A549 (cell line): ENCODE measurements at regions of chr6 and their contacts with region 1.

Region 1: GRCh38 chr6:125974214-125974866 is 12.0 kb upstream of the TRMT11 start:
- DNase-seq: peak; percentile 19 to 52
- ATAC-seq: peak; percentile 77 to 81
- H3K4me3 ChIP-seq: no peak overlapping the region
- H3K27ac ChIP-seq: peak overlapping the region; percentile 41 to 73; a peak in 3 of 6 replicates
- H3K4me1 ChIP-seq: peaks cover 6% of the 10 kb centered on the region; the same call in 1 of the 3 replicates
- CTCF ChIP-seq: peak; percentile 72
- EP300 ChIP-seq: no peak
- POLR2A ChIP-seq: no peak
- RAD21 ChIP-seq: peak; percentile 72 to 73

Region 2: DNA sequence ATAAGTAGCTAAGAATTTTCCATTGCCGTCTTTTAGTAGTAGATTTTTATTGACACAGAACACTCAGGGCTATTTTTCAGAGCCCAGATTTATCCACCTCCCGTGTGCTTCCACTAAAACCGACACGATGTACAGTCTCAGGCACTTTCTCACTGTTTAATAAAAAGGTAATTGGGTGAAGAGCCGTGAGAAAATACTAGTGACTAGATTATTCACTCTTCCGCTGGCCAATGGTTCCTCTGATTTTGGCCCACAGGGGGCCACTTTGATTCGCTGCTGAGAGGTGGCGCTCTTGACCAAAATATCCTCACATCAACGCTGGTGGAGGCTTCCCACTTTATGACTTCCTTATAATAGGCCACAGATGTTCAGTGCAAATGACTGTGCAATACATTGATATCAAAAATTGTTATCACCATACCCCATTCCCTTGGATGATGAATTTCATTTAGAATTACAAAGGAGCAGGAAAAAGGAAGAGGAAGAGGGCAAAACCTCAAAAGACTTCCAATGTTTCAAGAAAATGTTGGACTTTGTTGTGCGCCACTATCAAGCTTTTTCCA is 660.2 kb before region 1 on chr6:
- CTCF ChIA-PET with region 1: interaction called, 15 read pairs
- POLR2A ChIA-PET with region 1: no interaction called
- DNase-seq: peak; percentile 27 to 53
- ATAC-seq: peak; percentile 90 to 93
- H3K4me3 ChIP-seq: no peak overlapping the region
- H3K27ac ChIP-seq: no peak overlapping the region
- H3K4me1 ChIP-seq: peaks cover 15% of the 10 kb centered on the region; the same call in 2 of the 3 replicates
- CTCF ChIP-seq: peak; percentile 81
- EP300 ChIP-seq: no peak
- POLR2A ChIP-seq: no peak
- RAD21 ChIP-seq: peak; percentile 84 to 86

Region 3: DNA sequence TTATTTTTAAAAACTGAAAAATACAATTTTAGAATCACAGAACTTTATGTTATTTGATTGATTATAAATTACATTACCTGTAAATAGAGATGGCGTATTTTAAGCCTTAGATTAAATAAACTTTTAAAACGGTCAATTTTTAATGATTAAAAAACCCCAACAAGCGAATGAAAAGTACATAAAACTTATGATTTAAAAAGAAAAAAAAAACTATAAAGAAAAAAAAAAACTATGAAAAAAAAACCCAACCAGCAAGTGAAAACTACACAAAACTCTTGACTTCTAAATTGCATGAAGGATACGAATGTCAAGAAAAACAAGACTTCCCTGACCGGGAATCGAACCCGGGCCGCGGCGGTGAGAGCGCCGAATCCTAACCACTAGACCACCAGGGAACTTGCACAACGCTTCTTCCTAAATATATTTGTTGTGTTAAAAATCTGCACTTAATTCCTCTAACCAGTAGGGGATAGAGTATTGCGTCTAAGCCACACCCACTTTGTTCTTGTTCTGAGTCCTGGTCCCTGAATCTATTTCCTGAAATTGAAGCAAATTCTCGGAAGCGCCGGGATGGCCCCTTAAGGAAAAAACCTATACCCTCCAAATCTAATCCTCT is 194.3 kb before region 1 on chr6:
- CTCF ChIA-PET with region 1: interaction called, 12 read pairs
- POLR2A ChIA-PET with region 1: no interaction called
- DNase-seq: peak; percentile 75 to 91
- ATAC-seq: peak; percentile 85 to 89
- H3K4me3 ChIP-seq: peak overlapping the region; percentile 53
- H3K27ac ChIP-seq: peak overlapping the region; percentile 88 to 91
- H3K4me1 ChIP-seq: peaks cover 23% of the 10 kb centered on the region
- CTCF ChIP-seq: no peak
- EP300 ChIP-seq: no peak
- POLR2A ChIP-seq: no peak
- RAD21 ChIP-seq: no peak

Region 4: GRCh38 chr6:125858427-125859320 is 115.7 kb before region 1 on chr6:
- CTCF ChIA-PET with region 1: interaction called, 25 read pairs
- POLR2A ChIA-PET with region 1: no interaction called
- DNase-seq: peak; percentile 83 to 85
- ATAC-seq: peak; percentile 100
- H3K4me3 ChIP-seq: no peak overlapping the region
- H3K27ac ChIP-seq: peak overlapping the region; percentile 44 to 68; a peak in 4 of 6 replicates
- H3K4me1 ChIP-seq: peaks cover 18% of the 10 kb centered on the region
- CTCF ChIP-seq: peak; percentile 74
- EP300 ChIP-seq: no peak
- POLR2A ChIP-seq: no peak
- RAD21 ChIP-seq: peak; percentile 83 to 95

Region 5: DNA sequence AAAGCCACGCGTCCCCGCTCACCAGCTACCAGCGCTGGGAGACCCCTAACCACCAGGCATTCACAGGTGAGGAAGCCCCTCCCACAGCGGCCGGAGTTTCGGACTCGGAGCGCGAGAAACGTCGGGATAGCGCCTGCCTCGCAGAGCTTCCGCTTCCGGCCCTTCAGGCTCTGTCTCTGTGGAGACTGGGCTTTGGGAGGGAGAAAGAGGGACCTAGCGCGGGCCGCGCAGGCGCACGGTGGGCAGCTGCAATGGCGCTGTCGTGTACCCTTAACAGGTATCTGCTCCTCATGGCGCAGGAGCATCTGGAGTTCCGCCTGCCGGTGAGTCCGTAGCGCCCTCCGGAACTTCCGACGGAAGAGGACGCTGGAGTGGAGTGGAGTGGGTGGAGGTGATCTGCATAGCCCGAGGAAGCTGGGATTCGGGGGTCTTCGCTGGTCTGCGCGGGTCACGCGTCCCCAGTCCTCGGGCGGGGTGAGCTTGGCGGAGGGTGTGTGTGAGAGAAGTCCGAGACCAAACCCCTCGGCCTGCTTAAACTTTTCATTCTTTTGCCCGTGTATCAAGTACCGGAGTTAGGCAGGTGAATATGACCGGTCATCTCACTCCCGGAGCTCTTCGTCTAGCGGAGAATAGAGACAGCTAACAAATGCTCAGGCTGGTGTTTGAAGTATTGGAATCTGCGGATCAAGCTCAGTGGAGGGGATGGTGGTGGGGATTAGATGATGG is 12.1 kb after region 1 on chr6 and contains the start of gene TRMT11:
- CTCF ChIA-PET with region 1: interaction called, 13 read pairs
- POLR2A ChIA-PET with region 1: interaction called, 4 read pairs
- DNase-seq: peak; percentile 85 to 89
- ATAC-seq: peak; percentile 97 to 99
- H3K4me3 ChIP-seq: peak within 1 kb of the TSS; percentile 68
- H3K27ac ChIP-seq: peak within 1 kb of the TSS; percentile 92 to 95
- H3K4me1 ChIP-seq: peaks cover 46% of the 10 kb centered on the region
- CTCF ChIP-seq: no peak
- EP300 ChIP-seq: no peak
- POLR2A ChIP-seq: peak; percentile 90
- RAD21 ChIP-seq: no peak
- polyA plus RNA-seq, gene TRMT11: 33.2 and 44.1 TPM in 2 replicates

Region 6: GRCh38 chr6:126614642-126615452 is 640.5 kb after region 1 on chr6:
- CTCF ChIA-PET with region 1: no interaction called
- POLR2A ChIA-PET with region 1: no interaction called
- DNase-seq: no peak
- ATAC-seq: no peak
- H3K4me3 ChIP-seq: no peak overlapping the region
- H3K27ac ChIP-seq: no peak overlapping the region
- H3K4me1 ChIP-seq: no peaks in the 10 kb centered on the region
- CTCF ChIP-seq: no peak
- EP300 ChIP-seq: no peak
- POLR2A ChIP-seq: no peak
- RAD21 ChIP-seq: no peak